GM12878 (cell line): ENCODE measurements at regions of chr15 and their contacts with region 1.

Region 1: DNA sequence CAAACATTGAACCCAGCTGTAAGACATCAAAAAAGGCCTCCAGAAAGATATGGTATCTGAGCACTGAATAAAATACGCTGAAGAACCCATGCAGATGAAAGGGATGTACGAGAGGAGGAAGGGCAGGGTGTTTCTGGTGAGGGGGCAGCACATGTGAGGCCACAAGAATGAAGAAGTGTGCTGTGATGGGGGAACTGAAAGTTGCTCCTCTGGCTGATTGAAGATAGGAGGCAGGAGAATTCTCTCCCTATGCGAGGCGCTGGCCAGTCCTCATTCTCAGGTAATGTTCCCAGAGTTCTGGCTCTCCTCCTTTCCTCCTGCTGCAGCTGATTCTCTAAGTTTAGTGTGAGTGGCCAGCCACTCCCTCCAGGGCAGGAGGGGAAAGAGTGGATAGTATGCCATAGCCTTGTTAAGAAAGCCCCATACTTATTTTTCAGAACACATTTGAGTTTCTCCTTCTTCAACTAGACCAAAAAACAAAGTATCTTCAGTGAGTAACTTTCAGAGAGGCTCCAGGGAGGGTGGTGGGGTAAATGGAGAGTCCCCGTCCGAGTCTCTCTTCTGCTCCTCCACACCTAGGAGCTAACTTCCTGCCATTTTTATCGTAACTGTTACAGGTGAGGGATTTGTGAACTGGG is 26.9 kb upstream of the MYO1E start:
- DNase-seq: peak; percentile 77
- ATAC-seq: peak; percentile 96
- H3K4me3 ChIP-seq: peak overlapping the region; percentile 43
- H3K27ac ChIP-seq: peak overlapping the region; percentile 87
- H3K4me1 ChIP-seq: peaks cover 48% of the 10 kb centered on the region
- H3K27me3 ChIP-seq: no peaks in the 10 kb centered on the region
- CTCF ChIP-seq: no peak
- EP300 ChIP-seq: peak; percentile 83 to 97
- POLR2A ChIP-seq: no peak; the same call in 1 of the 2 replicates
- RAD21 ChIP-seq: no peak

Region 2: DNA sequence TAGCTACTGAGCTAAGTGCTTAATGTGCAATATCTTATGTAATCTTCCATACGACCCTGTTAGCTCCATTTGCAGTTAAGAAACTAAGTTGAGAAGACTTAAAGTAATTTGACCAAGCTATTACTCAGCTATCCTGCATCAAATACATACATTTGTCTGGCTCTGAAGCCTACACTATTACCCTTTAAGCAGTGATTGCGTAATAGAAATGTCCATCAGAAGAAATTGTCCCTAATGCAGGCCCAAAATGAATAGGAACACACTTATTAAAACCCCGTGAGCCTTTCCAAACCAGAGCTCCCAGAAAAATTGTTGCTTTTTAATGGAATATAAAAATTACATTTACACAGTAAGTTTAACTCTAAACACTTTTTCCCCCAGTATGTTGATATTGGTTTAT is 21.6 kb before region 1 on chr15:
- CTCF ChIA-PET with region 1: interaction called, 6 read pairs
- POLR2A ChIA-PET with region 1: interaction called, 6 read pairs
- RAD21 ChIA-PET with region 1: interaction called, 4 read pairs
- SMC1A ChIA-PET with region 1: interaction called, 13 read pairs
- in situ Hi-C with region 1: no loop called
- intact Hi-C with region 1: no loop called
- DNase-seq: no peak
- ATAC-seq: no peak
- H3K4me3 ChIP-seq: no peak overlapping the region
- H3K27ac ChIP-seq: no peak overlapping the region
- H3K4me1 ChIP-seq: no peaks in the 10 kb centered on the region; the same call in 1 of the 2 replicates
- H3K27me3 ChIP-seq: no peaks in the 10 kb centered on the region
- CTCF ChIP-seq: no peak
- EP300 ChIP-seq: no peak
- POLR2A ChIP-seq: no peak
- RAD21 ChIP-seq: no peak